Activated naive CD4-positive, alpha-beta T cell treated with anti-CD3 and anti-CD28 coated beads, Interleukin-2, amount 10 ng/mL, durations not matched to agents 7 days and 5 days (primary cell): ENCODE measurements at regions of chr1 and their contacts with region 1.

Region 1: GRCh38 chr1:1788646-1789431 is 10.6 kb upstream of the NADK start:
- DNase-seq: peak; percentile 48
- H3K4me3 Mint-ChIP-seq: no peak overlapping the region
- H3K27ac Mint-ChIP-seq: peak overlapping the region; percentile 19
- H3K4me1 Mint-ChIP-seq: peaks cover 3% of the 10 kb centered on the region
- H3K27me3 Mint-ChIP-seq: no peaks in the 10 kb centered on the region

Region 2: DNA sequence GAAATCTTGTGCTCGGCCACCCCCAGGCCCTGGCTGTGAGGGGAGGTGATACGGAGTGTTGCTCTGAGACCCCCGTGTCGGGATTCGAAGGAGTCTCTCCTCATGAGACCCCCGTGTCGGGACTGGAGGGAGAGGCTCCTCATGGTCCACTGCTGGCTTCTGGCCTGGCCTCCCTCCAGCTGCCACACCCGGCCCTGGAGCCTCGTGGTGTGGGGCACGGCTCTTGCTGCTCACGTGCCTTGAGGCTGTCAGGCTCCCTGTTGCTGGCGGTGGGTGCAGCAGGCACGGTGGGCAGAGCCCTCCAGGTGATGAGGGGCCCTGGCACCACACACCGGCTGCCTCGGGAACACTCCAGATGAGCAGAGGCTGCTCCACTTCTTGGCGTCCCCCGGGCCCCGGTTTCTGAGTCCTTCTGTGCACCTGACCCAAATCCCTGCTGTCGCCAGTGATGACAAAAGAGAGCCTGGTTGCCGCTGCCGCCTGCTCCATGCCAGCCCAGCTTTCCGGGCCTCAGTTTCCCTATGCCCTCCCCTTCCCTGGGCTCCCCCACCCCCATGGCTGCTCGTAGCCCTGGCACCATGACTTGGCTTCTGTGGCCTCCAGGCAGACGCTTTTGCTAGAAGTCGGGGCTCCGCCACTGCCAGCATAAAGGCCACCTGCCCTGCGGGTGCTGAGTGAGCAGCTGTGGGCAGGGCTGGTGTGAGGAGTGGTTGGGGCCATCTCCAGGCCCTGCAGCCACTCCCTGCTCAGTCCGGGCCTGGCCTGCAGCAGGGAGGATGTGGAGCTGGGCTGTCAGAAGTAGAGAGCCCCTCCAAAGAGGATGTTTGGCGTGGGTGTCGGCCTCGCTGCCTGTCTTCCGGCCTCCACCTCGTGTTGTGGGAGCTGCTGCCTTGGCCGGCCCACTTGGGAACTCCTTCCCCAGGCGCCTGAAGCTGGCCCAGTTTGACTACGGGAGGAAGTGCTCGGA is 260.3 kb before region 1 on chr1:
- CTCF ChIA-PET with region 1: no interaction called
- DNase-seq: no peak
- H3K4me3 Mint-ChIP-seq: no peak overlapping the region
- H3K27ac Mint-ChIP-seq: no peak overlapping the region
- H3K4me1 Mint-ChIP-seq: no peaks in the 10 kb centered on the region
- H3K27me3 Mint-ChIP-seq: no peaks in the 10 kb centered on the region

Region 3: GRCh38 chr1:1763657-1764616 is 24.9 kb before region 1 on chr1:
- CTCF ChIA-PET with region 1: no interaction called
- DNase-seq: no peak
- H3K4me3 Mint-ChIP-seq: no peak overlapping the region
- H3K27ac Mint-ChIP-seq: no peak overlapping the region
- H3K4me1 Mint-ChIP-seq: peaks cover 3% of the 10 kb centered on the region
- H3K27me3 Mint-ChIP-seq: no peaks in the 10 kb centered on the region

Region 4: GRCh38 chr1:1906185-1907097 is 117.6 kb after region 1 on chr1:
- CTCF ChIA-PET with region 1: interaction called, 13 read pairs
- DNase-seq: peak; percentile 78
- H3K4me3 Mint-ChIP-seq: peak overlapping the region; percentile 30
- H3K27ac Mint-ChIP-seq: no peak overlapping the region
- H3K4me1 Mint-ChIP-seq: peaks cover 20% of the 10 kb centered on the region
- H3K27me3 Mint-ChIP-seq: peaks cover 13% of the 10 kb centered on the region